Tibial artery (tissue), 4 donors: ENCODE measurements at regions of chr6 and their contacts with region 1.

Region 1: GRCh38 chr6:151240036-151240685 is 394 bp downstream of the AKAP12 start:
- DNase-seq: peak; percentile 91 to 94
- H3K4me3 ChIP-seq: peak overlapping the region; percentile 95 to 97
- H3K27ac ChIP-seq: peak overlapping the region; percentile 98 to 99
- H3K4me1 ChIP-seq: peaks cover 0 to 31% (median 10%) of the 10 kb centered on the region in 4 donors
- H3K27me3 ChIP-seq: no peaks in the 10 kb centered on the region
- CTCF ChIP-seq: no peak

Region 2: GRCh38 chr6:151160929-151161757 is 79.0 kb before region 1 on chr6:
- intact Hi-C with region 1: no loop called
- DNase-seq: no peak
- H3K4me3 ChIP-seq: no peak overlapping the region
- H3K27ac ChIP-seq: no peak overlapping the region
- H3K4me1 ChIP-seq: no peaks in the 10 kb centered on the region
- H3K27me3 ChIP-seq: no peaks in the 10 kb centered on the region
- CTCF ChIP-seq: no peak

Region 3: DNA sequence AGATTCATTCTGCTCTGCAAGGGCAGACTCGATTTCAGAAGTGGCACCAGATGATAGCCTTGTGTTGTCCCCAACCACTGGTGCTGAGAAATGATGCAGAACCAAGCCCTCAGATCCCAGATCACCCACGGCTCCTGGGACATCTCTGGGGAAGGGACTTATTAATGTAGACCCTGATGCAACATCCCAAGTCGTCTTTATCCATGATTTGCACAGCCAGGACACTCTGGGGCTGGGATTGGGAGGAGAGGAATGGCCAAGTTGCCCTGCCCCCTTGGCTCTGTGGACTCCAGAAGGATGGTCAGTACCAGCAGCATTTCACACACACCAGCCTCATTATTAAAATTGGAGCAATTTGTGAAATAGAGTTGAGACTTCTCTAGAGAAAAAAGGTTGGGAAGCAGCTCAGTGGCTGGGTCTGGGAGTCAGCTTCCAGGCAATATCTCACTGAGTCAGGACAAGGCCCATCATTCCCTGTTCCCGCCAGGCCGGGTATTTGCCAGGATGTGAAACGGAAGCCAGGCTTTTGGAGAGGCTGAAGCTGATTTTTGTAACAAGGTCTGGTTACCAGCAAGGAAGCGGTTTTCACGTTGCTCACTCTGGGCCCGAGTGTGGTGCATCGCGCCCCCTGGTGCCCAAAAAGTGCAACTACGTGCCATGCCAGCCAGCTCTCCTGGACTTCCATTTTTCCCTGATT is 83.8 kb after region 1 on chr6:
- intact Hi-C with region 1: loop called (anchors 10 kb)
- DNase-seq: peak; percentile 89 to 94
- H3K4me3 ChIP-seq: peak overlapping the region in 1 of 2 donors; percentile 61
- H3K27ac ChIP-seq: peak overlapping the region; percentile 19 to 70
- H3K4me1 ChIP-seq: peaks cover 5 to 24% (median 16%) of the 10 kb centered on the region in 4 donors
- H3K27me3 ChIP-seq: no peaks in the 10 kb centered on the region
- CTCF ChIP-seq: peak; percentile 98 to 99